Right cardiac atrium (tissue), 5 donors: ENCODE measurements at regions of chr7 and their contacts with region 1.

Region 1: DNA sequence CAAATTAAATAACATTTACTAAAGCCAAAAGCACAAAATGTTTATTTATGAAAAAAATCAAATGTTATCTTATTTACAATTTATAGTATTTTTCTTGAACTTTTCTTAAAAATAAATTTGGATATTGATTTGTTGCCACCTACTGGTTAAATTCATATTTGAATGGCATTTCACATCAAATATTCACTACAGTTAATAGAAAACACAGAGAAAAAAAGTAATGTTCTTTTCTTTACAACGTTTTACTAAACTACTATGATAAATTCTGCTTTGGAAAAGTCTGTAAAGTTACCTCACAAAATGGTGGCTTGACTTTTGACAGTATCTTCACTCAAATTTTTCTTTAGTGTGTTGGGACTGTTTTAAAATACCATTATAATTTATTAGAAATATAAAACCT is 52.7 kb downstream of the SRPK2 start:
- DNase-seq: no peak
- ATAC-seq: no peak
- H3K4me3 ChIP-seq: no peak overlapping the region
- H3K27ac ChIP-seq: no peak overlapping the region
- H3K4me1 ChIP-seq: no peaks in the 10 kb centered on the region
- H3K27me3 ChIP-seq: no peaks in the 10 kb centered on the region

Region 2: DNA sequence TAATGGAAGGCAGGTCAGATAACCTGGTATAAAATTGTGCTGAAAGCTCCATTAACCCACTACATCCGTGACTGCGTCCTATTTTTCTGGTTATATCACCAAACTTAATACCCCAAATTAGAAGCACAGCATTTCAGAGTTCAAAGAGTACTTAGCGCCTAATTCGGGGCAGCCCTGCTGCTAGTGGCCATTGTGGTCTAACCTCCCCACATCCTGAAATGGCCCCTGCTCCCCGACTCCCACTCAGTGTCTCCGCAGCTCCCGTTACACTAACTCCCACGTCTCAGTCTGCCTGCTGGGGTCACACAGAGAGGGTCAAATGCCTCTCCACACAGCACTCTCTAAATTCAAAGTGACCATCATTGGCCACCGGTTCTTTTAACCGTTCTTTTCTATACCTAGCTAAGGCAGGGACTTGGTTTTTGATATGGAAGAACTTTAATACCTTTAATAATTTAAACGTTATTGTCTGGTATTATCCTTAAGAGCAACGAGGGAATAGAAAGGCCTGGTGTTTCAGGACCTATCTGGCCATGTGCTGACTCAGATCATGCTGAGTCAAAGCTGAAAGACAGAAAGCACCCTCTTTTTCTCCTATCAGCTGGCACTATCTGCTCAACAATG is 204.9 kb before region 1 on chr7:
- intact Hi-C with region 1: loop called in 1 of 4 experiments (anchors 10 kb)
- DNase-seq: no peak
- ATAC-seq: no peak
- H3K4me3 ChIP-seq: no peak overlapping the region
- H3K27ac ChIP-seq: no peak overlapping the region
- H3K4me1 ChIP-seq: no peaks in the 10 kb centered on the region
- H3K27me3 ChIP-seq: no peaks in the 10 kb centered on the region

Region 3: GRCh38 chr7:105149827-105150226 is 186.2 kb before region 1 on chr7:
- intact Hi-C with region 1: loop called in 1 of 4 experiments (anchors 10 kb)
- DNase-seq: no peak
- ATAC-seq: peak in 1 of 2 donors; percentile 45
- H3K4me3 ChIP-seq: no peak overlapping the region
- H3K27ac ChIP-seq: no peak overlapping the region
- H3K4me1 ChIP-seq: peaks cover 5% of the 10 kb centered on the region
- H3K27me3 ChIP-seq: no peaks in the 10 kb centered on the region

Region 4: DNA sequence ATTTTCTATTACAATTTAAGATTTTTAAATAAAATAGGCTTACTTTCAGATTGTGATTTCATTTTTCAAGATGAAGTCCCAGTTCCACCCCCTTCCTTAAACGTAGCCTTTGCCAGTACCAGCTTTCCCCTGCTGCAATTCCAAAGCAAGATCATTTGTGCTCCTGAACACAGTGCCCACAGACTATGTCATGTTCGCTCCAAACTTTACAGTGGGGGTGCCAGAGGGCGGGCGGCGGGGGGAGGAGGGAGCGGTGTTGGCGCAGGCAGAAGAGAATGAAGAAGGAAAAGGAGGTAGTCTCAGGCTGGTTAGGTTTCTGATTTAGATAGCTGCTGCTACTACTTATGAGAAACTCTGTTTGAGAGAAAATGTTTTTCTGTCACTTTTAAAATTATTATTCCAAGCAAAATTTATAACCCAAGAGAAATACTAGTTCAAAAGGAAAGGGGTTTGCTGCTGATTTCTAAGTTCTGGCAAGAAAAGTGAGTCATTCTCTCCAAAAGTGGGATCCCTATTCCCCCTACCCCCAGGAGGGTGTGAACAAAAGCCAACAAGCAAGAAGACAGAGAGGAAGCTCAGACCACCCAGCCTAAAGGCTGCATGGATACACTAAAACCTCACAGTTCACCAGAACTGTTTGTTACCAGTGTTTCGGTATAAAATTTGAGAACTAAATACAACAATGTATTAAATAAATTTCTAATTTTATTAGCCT is 56.9 kb before region 1 on chr7:
- intact Hi-C with region 1: loop called in 1 of 4 experiments (anchors 10 kb)
- DNase-seq: no peak
- ATAC-seq: no peak
- H3K4me3 ChIP-seq: no peak overlapping the region
- H3K27ac ChIP-seq: no peak overlapping the region
- H3K4me1 ChIP-seq: peaks cover 4% of the 10 kb centered on the region
- H3K27me3 ChIP-seq: no peaks in the 10 kb centered on the region